ENCODE measurements at regions of chr5 and their contacts with region 1.

Region 1: DNA sequence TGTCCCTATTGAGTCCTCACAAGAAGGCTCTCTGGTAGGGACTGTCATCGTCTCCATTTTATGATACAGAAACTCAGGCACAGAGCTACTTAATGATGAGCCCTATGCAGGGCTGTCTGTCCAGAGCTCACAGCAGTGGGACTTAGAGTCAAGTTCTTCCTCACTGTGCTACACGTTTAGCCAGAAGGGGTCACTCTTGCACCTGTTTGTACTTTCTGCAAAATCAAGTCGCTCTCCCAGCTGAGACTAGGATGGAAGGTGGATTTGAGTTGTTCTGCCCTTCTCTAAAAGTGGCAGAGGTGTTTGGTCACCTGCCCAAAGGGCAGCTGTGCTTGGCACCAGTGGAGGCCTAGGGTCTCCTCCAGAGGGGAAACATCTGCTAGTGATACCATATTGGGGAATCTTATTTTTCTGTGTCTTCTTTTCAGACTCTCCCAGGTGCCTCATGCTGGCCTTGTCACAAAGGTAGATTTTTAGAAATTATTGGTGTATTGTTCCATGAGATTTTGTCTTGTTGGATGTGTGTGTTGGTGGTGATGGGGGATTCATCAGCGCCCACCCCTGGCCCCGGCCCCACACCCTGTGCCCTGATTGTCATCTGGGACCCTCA is 104.2 kb downstream of the PPARGC1B start:
- DNase-seq: peak; percentile 72
- CTCF ChIP-seq: peak; percentile 67

Region 2: DNA sequence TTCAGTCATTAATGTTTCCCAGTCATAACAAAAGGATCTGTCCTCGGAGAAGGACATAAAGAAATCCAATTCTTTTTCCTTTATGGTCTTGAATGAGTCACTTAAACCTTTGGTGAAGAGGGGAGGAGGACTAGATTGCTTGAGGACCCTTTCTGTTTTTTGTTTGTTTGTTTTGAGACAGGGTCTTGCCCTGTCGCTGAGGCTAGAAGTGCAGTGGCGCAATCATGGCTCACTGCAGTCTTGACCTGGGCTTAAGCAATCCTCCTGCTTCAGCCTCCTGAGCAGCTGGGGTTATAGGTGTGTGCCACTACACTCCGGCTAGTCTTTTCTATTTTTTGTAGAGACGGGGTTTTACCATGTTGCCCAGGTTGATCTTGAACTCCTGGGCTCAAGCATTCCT is 153.8 kb after region 1 on chr5:
- in situ Hi-C with region 1: loop called (anchors 10 kb)
- DNase-seq: no peak
- CTCF ChIP-seq: no peak

Region 3: DNA sequence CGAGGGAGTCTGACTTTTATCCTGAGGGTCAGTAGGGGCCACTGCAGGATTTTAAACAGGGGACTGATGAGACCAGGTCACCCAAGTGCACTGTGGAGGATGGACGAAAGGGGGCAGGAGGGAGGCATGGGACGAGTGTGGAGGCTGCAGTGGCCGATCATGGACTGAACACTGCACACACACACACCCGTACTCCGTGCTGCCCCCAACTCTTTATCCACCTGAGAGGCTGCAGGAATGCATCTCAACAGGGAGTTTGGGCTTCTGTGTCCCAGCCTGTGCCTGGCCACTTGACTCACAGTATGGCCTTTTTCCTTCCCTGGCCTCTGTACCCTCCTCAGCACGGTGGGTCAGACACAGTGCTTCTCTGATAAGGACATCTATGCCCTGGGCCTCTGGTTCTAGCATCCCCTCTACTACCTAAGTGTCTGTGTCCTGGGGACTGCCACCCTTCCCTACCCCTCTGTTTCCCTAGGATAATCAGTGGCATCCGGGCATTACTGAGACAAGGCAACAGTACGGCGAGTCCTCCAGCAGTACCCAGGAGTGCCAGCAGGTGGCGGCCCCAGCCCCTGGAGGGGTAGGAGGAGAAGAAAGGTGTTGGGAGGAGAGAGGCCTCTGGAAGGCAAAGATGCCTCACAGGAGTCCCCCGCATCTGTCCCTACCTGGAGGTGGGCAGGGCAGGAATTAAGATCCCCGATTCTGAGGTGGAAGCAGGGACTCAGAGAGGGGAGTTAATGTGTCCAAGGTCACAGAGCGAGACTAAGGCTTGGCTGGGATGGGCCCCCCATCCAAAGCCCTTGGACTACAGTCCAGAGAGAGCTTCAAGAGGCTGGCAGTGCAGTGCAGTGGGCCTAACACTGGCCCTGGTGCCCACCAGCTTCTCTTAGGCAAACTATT is 327.1 kb after region 1 on chr5:
- in situ Hi-C with region 1: no loop called
- DNase-seq: peak; percentile 86
- CTCF ChIP-seq: peak; percentile 94